ENCODE measurements at regions of chr5 and their contacts with region 1.

Region 1: DNA sequence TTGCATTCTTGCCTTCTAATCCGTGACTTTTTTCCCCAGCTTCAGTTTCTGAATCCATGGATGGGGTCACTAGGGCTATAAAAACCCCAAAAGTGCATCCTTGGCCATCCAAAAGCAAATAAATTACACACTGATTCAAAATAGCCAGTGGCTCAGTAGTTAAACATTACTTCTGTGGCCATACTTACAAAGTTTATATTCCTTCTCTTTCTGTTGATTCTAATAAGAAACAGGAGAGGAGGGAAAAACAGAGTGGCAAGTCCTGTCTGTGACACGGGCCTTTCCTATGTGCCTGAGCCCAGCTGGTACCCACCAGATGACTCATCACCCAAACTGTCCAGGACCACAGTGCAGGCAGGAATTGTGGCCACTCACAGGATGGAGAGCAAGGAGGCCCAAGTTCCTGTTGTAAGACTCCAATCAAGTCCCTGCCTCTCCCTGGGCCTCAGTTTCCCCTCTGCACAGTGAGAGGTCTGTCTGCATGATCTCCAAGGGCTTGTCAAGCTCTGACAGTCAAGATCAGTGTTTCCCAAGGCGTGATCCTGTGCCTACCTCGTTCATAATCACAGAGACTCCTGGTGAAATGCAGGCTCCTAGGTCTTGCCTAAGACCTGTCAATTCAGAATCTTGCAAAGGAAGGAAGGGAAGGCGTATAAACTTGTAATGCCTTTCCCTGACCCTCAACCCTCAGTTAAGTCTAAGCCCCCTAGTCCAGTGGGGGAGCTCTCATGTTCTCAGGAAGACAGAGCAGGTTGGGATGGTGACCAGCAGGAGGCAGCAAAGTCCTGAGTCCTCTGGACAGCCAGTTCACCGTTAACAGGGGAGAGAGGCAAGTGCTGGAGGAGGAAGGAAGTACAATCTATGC is 29.5 kb downstream of the TNIP1 start:
- DNase-seq: peak; percentile 81
- H3K4me3 ChIP-seq: no peak overlapping the region
- H3K27ac ChIP-seq: no peak overlapping the region
- H3K4me1 ChIP-seq: no peaks in the 10 kb centered on the region
- H3K27me3 ChIP-seq: no peaks in the 10 kb centered on the region
- CTCF ChIP-seq: peak; percentile 86 to 91
- POLR2A ChIP-seq: no peak

Region 2: GRCh38 chr5:151030400-151030799 is 20.9 kb before region 1 on chr5:
- CTCF ChIA-PET with region 1: interaction called, 10 read pairs
- POLR2A ChIA-PET with region 1: no interaction called
- dilution Hi-C with region 1: no loop called
- intact Hi-C with region 1: no loop called
- DNase-seq: no peak
- H3K4me3 ChIP-seq: no peak overlapping the region
- H3K27ac ChIP-seq: no peak overlapping the region
- H3K4me1 ChIP-seq: no peaks in the 10 kb centered on the region
- H3K27me3 ChIP-seq: no peaks in the 10 kb centered on the region
- CTCF ChIP-seq: no peak
- POLR2A ChIP-seq: no peak

Region 3: GRCh38 chr5:151068433-151069197 is 17.3 kb after region 1 on chr5:
- CTCF ChIA-PET with region 1: interaction called, 46 read pairs
- POLR2A ChIA-PET with region 1: no interaction called
- dilution Hi-C with region 1: no loop called
- intact Hi-C with region 1: no loop called
- DNase-seq: no peak
- H3K4me3 ChIP-seq: no peak overlapping the region
- H3K27ac ChIP-seq: peak overlapping the region; percentile 52
- H3K4me1 ChIP-seq: peaks cover 27% of the 10 kb centered on the region
- H3K27me3 ChIP-seq: no peaks in the 10 kb centered on the region
- CTCF ChIP-seq: no peak
- POLR2A ChIP-seq: no peak

Region 4: GRCh38 chr5:151093476-151093889 is 42.2 kb after region 1 on chr5:
- CTCF ChIA-PET with region 1: interaction called, 30 read pairs
- POLR2A ChIA-PET with region 1: no interaction called
- dilution Hi-C with region 1: no loop called
- intact Hi-C with region 1: loop called (anchors 5 kb)
- DNase-seq: no peak
- H3K4me3 ChIP-seq: no peak overlapping the region
- H3K27ac ChIP-seq: peak overlapping the region; percentile 67
- H3K4me1 ChIP-seq: peaks cover 52% of the 10 kb centered on the region
- H3K27me3 ChIP-seq: no peaks in the 10 kb centered on the region
- CTCF ChIP-seq: no peak
- POLR2A ChIP-seq: no peak

Region 5: GRCh38 chr5:151134238-151134637 is 82.9 kb after region 1 on chr5:
- CTCF ChIA-PET with region 1: interaction called, 14 read pairs
- POLR2A ChIA-PET with region 1: no interaction called
- dilution Hi-C with region 1: no loop called
- intact Hi-C with region 1: no loop called
- DNase-seq: no peak
- H3K4me3 ChIP-seq: no peak overlapping the region
- H3K27ac ChIP-seq: no peak overlapping the region
- H3K4me1 ChIP-seq: no peaks in the 10 kb centered on the region
- H3K27me3 ChIP-seq: no peaks in the 10 kb centered on the region
- CTCF ChIP-seq: no peak
- POLR2A ChIP-seq: no peak

Region 6: GRCh38 chr5:151239237-151239861 is 188.1 kb after region 1 on chr5:
- CTCF ChIA-PET with region 1: interaction called, 17 read pairs
- POLR2A ChIA-PET with region 1: no interaction called
- dilution Hi-C with region 1: no loop called
- intact Hi-C with region 1: loop called (anchors 2 kb)
- DNase-seq: peak; percentile 67
- H3K4me3 ChIP-seq: no peak overlapping the region
- H3K27ac ChIP-seq: no peak overlapping the region
- H3K4me1 ChIP-seq: no peaks in the 10 kb centered on the region
- H3K27me3 ChIP-seq: no peaks in the 10 kb centered on the region
- CTCF ChIP-seq: peak; percentile 73 to 88
- POLR2A ChIP-seq: no peak